ENCODE measurements at regions of chr7 and their contacts with region 1.

Region 1: GRCh38 chr7:5665094-5666025 is 116.1 kb downstream of the RNF216 start:
- DNase-seq: peak; percentile 62 to 79
- ATAC-seq: peak; percentile 93 to 95
- H3K4me3 ChIP-seq: no peak overlapping the region
- H3K27ac ChIP-seq: no peak overlapping the region
- H3K4me1 ChIP-seq: peaks cover 4% of the 10 kb centered on the region; the same call in 1 of the 3 replicates
- CTCF ChIP-seq: peak; percentile 92
- EP300 ChIP-seq: no peak
- POLR2A ChIP-seq: no peak
- RAD21 ChIP-seq: peak; percentile 92 to 93

Region 2: GRCh38 chr7:5541087-5541992 is 124.0 kb before region 1 on chr7:
- CTCF ChIA-PET with region 1: interaction called, 10 read pairs
- POLR2A ChIA-PET with region 1: no interaction called
- DNase-seq: no peak
- ATAC-seq: peak; percentile 40 to 59; a peak in 5 of 6 replicates
- H3K4me3 ChIP-seq: no peak overlapping the region
- H3K27ac ChIP-seq: peak overlapping the region in 1 of 2 experiments; percentile 32; a peak in 1 of 6 replicates
- H3K4me1 ChIP-seq: no peaks in the 10 kb centered on the region
- CTCF ChIP-seq: no peak
- EP300 ChIP-seq: no peak
- POLR2A ChIP-seq: no peak
- RAD21 ChIP-seq: no peak

Region 3: GRCh38 chr7:5596046-5596895 is 69.1 kb before region 1 on chr7:
- CTCF ChIA-PET with region 1: interaction called, 12 read pairs
- POLR2A ChIA-PET with region 1: no interaction called
- DNase-seq: peak; percentile 84 to 91
- ATAC-seq: peak; percentile 57 to 70
- H3K4me3 ChIP-seq: peak overlapping the region; percentile 78
- H3K27ac ChIP-seq: peak overlapping the region; percentile 90 to 98
- H3K4me1 ChIP-seq: peaks cover 55% of the 10 kb centered on the region
- CTCF ChIP-seq: no peak
- EP300 ChIP-seq: peak in 1 of 2 experiments; percentile 32; a peak in 1 of 5 replicates
- POLR2A ChIP-seq: peak; percentile 20; the same call in 1 of the 2 replicates
- RAD21 ChIP-seq: no peak

Region 4: DNA sequence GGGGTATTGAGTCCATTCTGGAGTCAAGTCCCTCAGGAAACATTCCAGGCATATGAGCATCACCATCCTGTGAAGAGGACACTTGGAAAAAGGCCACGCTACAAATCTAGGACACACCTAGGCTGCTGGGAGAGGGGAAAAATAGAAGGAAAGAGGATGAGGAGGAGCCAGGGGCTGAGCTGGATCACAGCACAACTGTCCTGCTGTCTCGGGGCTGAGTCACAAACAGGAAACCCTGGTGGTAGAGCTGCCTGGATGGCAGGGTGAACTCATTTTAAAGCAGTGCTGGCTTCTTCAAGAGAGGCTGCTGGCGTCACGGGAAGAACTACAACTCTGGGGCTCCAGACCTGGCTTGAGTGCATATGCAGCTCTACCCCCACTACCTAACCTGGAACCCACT is 35.4 kb before region 1 on chr7:
- CTCF ChIA-PET with region 1: interaction called, 13 read pairs
- POLR2A ChIA-PET with region 1: no interaction called
- DNase-seq: no peak
- ATAC-seq: peak; percentile 65 to 68; a peak in 5 of 6 replicates
- H3K4me3 ChIP-seq: no peak overlapping the region
- H3K27ac ChIP-seq: no peak overlapping the region
- H3K4me1 ChIP-seq: peaks cover 15% of the 10 kb centered on the region; the same call in 2 of the 3 replicates
- CTCF ChIP-seq: no peak
- EP300 ChIP-seq: no peak
- POLR2A ChIP-seq: no peak
- RAD21 ChIP-seq: no peak

Region 5: DNA sequence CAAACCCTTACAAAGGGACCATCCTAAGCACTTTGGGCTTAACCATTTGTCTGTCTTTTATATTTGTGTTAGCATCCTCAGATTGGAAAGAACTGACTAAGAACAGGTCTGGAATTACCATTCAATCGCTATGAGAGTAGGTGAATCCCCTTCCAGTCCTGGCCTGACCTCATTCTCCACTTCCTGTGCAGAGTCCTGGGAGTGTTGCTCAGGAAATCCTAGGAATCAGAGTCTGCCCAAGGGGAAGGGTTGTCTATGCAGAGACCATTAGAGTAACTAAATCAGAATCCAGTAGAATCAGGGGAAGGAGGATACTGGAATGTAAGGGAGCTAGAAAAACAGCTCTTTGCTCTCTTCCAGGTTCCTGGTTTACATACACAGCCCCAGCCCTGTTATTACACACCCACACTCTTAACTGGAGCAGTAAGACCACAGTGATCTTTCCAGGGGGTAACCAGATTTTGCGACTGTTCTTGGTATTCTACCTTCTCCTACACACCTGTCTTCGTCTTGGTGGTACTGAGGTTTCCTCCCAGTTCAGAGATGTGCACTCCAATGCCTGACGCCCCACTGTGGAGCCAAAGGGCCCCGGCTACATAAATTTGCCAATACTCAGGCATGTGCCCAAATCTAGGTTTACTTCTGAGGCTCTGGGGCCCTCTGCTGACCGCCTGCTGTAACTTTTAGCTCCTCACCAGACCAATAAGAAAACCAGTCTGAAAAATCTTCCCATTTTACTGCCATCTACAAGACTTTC is 12.4 kb after region 1 on chr7:
- CTCF ChIA-PET with region 1: interaction called, 190 read pairs
- POLR2A ChIA-PET with region 1: no interaction called
- DNase-seq: peak; percentile 55 to 70
- ATAC-seq: peak; percentile 89 to 90
- H3K4me3 ChIP-seq: no peak overlapping the region
- H3K27ac ChIP-seq: peak overlapping the region; percentile 21 to 54; a peak in 4 of 6 replicates
- H3K4me1 ChIP-seq: peaks cover 13% of the 10 kb centered on the region
- CTCF ChIP-seq: peak; percentile 77
- EP300 ChIP-seq: no peak
- POLR2A ChIP-seq: no peak
- RAD21 ChIP-seq: peak; percentile 81 to 86

Region 6: GRCh38 chr7:5704534-5704922 is 39.2 kb after region 1 on chr7:
- CTCF ChIA-PET with region 1: interaction called, 65 read pairs
- POLR2A ChIA-PET with region 1: no interaction called
- DNase-seq: peak; percentile 71 to 77
- ATAC-seq: peak; percentile 87 to 89
- H3K4me3 ChIP-seq: no peak overlapping the region
- H3K27ac ChIP-seq: peak overlapping the region in 1 of 2 experiments; percentile 41; a peak in 4 of 6 replicates
- H3K4me1 ChIP-seq: peaks cover 38% of the 10 kb centered on the region
- CTCF ChIP-seq: peak; percentile 97
- EP300 ChIP-seq: no peak
- POLR2A ChIP-seq: no peak
- RAD21 ChIP-seq: peak; percentile 92 to 96

Region 7: DNA sequence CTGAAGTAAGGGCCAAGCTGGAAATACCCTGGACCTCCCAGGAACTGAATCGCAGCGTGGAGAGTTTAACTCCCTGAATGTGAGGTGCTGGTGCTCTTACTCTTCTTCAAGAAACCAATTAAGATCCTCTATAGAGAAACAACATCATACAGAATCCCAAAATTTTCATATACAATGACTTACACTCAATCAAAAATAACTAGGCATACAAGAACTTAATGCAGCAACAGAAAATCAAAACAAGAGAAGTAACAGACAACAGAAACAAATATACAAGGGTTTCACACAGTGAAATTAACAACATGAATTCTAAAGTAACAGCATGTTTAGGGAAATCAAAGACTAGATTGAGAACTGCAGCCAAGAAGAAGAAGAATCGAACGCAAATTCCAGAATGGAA is 78.4 kb after region 1 on chr7:
- CTCF ChIA-PET with region 1: no interaction called
- POLR2A ChIA-PET with region 1: no interaction called
- DNase-seq: no peak
- ATAC-seq: no peak
- H3K4me3 ChIP-seq: no peak overlapping the region
- H3K27ac ChIP-seq: no peak overlapping the region
- H3K4me1 ChIP-seq: 0 out of 3 replicates have a peak, but pooled peaks cover 3% of the 10 kb centered on the region
- CTCF ChIP-seq: no peak
- EP300 ChIP-seq: no peak
- POLR2A ChIP-seq: no peak
- RAD21 ChIP-seq: no peak